ENCODE measurements at regions of chr1 and their contacts with region 1.

Region 1: GRCh38 chr1:94792473-94793295 is 27.5 kb upstream of the SLC44A3 start:
- DNase-seq: no peak
- ATAC-seq: peak; percentile 36 to 63
- H3K4me3 ChIP-seq: no peak overlapping the region
- H3K27ac ChIP-seq: peak overlapping the region; percentile 47 to 69 (median 56)
- H3K4me1 ChIP-seq: peaks cover 6 to 17% of the 10 kb centered on the region in 2 donors
- H3K27me3 ChIP-seq: no peaks in the 10 kb centered on the region
- CTCF ChIP-seq: peak in 1 of 5 experiments; percentile 18
- POLR2A ChIP-seq: no peak

Region 2: GRCh38 chr1:94486990-94487389 is 305.7 kb before region 1 on chr1:
- in situ Hi-C with region 1: no loop called
- intact Hi-C with region 1: no loop called
- DNase-seq: no peak
- ATAC-seq: no peak
- H3K4me3 ChIP-seq: no peak overlapping the region
- H3K27ac ChIP-seq: no peak overlapping the region
- H3K4me1 ChIP-seq: no peaks in the 10 kb centered on the region
- H3K27me3 ChIP-seq: no peaks in the 10 kb centered on the region
- CTCF ChIP-seq: no peak
- POLR2A ChIP-seq: no peak

Region 3: DNA sequence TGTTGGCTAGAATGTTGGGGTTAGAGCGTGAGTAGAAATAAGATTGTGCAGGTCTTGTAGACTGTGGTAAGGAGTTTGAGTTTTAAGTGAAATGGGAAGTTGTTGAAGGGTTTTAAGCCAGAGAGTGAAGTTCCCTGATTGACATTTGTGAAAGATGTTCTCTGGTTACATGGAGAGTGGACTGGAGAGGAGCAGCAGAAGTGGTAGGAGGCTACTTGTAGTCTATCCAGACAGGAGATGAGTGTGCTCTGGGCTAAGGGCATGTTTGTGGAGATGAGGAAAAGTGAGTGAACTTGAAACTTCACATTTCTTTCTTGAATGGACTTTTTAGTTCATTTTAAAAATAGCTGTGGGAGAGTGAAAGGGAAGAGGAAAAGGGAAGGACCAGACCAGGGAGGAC is 288.1 kb before region 1 on chr1:
- in situ Hi-C with region 1: no loop called
- intact Hi-C with region 1: no loop called
- DNase-seq: no peak
- ATAC-seq: no peak
- H3K4me3 ChIP-seq: no peak overlapping the region
- H3K27ac ChIP-seq: no peak overlapping the region
- H3K4me1 ChIP-seq: no peaks in the 10 kb centered on the region
- H3K27me3 ChIP-seq: no peaks in the 10 kb centered on the region
- CTCF ChIP-seq: no peak
- POLR2A ChIP-seq: no peak

Region 4: GRCh38 chr1:94698759-94699502 is 93.8 kb before region 1 on chr1:
- in situ Hi-C with region 1: loop called in 1 of 4 experiments (anchors 10 kb)
- intact Hi-C with region 1: no loop called
- DNase-seq: no peak
- ATAC-seq: peak in 1 of 2 donors; percentile 27
- H3K4me3 ChIP-seq: no peak overlapping the region
- H3K27ac ChIP-seq: no peak overlapping the region
- H3K4me1 ChIP-seq: no peaks in the 10 kb centered on the region
- H3K27me3 ChIP-seq: no peaks in the 10 kb centered on the region
- CTCF ChIP-seq: no peak
- POLR2A ChIP-seq: no peak

Measured in gastrocnemius medialis (tissue), 4 donors.